Naive thymus-derived CD4-positive, alpha-beta T cell (primary cell): ENCODE measurements at regions of chr10 and their contacts with region 1.

Region 1: DNA sequence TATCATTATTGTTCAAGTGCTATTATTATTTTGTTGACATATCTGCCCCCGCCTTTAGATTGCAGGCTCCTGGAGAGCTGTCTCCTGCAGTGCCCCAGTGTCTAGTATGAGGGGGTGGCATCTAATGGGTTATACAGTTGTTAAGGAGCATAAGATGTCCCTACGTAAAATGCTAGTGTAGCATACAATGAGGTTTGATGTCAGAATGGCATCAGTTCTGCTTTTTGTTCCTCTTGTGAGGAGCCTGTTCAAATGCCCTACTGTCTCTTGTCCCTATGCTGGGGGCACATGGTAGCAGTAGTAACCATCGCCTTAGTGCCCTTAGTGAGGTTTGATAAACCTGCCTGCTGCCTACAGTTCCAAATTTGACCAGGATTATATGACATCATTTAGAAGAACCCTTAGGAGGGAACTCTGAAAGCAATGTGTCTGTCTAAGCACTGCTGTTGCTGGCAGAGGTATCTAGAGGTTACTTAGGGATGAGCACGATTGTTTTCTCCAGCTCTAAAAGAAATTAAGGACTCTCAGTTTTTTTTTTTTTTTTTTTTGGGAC is 9.7 kb downstream of the CREM start:
- DNase-seq: no peak
- ATAC-seq: peak; percentile 59
- H3K4me3 ChIP-seq: no peak overlapping the region
- H3K4me3 Mint-ChIP-seq: peak overlapping the region in 6 of 10 donors; percentile 0 to 65 (median 46)
- H3K27ac ChIP-seq: peak overlapping the region; percentile 14
- H3K27ac Mint-ChIP-seq: peak overlapping the region in 8 of 9 donors; percentile 3 to 87 (median 72)
- H3K4me1 ChIP-seq: peaks cover 17 to 23% of the 10 kb centered on the region in 2 donors
- H3K4me1 Mint-ChIP-seq: peaks cover 23 to 39% (median 35%) of the 10 kb centered on the region in 7 donors
- H3K27me3 ChIP-seq: no peaks in the 10 kb centered on the region
- H3K27me3 Mint-ChIP-seq: no peaks in the 10 kb centered on the region

Region 2: DNA sequence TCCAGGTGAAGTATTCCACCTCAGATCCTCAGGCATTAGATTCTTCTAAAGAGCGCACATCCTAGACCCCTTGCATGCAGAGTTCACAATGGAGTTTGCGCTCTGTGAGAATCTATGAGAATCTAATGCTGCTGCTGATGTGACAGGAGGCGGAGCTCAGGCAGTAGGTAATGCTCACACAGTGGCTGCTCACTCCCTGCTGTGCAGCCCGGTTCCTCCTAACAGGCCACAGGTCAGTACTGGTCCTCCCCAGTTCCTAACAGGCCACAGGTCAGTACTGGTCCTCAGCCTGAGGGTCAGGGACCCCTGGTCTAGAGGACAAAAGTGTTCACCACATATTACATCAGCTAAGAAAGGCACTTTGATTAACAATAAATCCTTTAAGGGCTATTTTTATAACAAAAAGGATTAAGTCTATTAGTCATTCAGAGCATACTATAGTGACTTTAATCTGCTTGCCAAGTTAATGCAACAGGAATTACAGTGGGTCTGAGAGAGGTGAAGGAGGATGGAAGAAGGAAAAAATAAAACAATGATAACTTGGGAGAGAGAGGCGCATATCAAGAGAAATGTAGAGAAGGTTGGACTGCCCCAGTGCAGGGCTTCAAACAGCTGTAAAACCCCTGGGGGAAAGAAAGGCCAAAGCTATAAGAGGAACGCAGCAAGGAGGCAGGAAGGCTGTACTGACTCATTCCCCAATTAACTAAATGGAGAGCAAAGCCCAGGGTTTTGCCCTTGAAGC is 95.4 kb before region 1 on chr10:
- CTCF ChIA-PET with region 1: no interaction called
- POLR2A ChIA-PET with region 1: no interaction called
- intact Hi-C with region 1: no loop called
- DNase-seq: no peak
- ATAC-seq: no peak
- H3K4me3 ChIP-seq: no peak overlapping the region
- H3K4me3 Mint-ChIP-seq: no peak overlapping the region
- H3K27ac ChIP-seq: no peak overlapping the region
- H3K27ac Mint-ChIP-seq: peak overlapping the region in 3 of 9 donors; percentile 7 to 39 (median 28)
- H3K4me1 ChIP-seq: no peaks in the 10 kb centered on the region
- H3K4me1 Mint-ChIP-seq: peaks cover 0 to 17% (median 5%) of the 10 kb centered on the region in 7 donors
- H3K27me3 ChIP-seq: no peaks in the 10 kb centered on the region
- H3K27me3 Mint-ChIP-seq: no peaks in the 10 kb centered on the region

Region 3: GRCh38 chr10:35153716-35154479 is 17.6 kb after region 1 on chr10:
- CTCF ChIA-PET with region 1: no interaction called
- POLR2A ChIA-PET with region 1: no interaction called
- intact Hi-C with region 1: loop called in 1 of 2 experiments (anchors 1 kb)
- DNase-seq: no peak
- ATAC-seq: no peak
- H3K4me3 ChIP-seq: no peak overlapping the region
- H3K4me3 Mint-ChIP-seq: no peak overlapping the region
- H3K27ac ChIP-seq: no peak overlapping the region
- H3K27ac Mint-ChIP-seq: no peak overlapping the region
- H3K4me1 ChIP-seq: peaks cover 9 to 14% of the 10 kb centered on the region in 2 donors
- H3K4me1 Mint-ChIP-seq: peaks cover 17 to 36% (median 21%) of the 10 kb centered on the region in 7 donors
- H3K27me3 ChIP-seq: no peaks in the 10 kb centered on the region
- H3K27me3 Mint-ChIP-seq: no peaks in the 10 kb centered on the region

Region 4: DNA sequence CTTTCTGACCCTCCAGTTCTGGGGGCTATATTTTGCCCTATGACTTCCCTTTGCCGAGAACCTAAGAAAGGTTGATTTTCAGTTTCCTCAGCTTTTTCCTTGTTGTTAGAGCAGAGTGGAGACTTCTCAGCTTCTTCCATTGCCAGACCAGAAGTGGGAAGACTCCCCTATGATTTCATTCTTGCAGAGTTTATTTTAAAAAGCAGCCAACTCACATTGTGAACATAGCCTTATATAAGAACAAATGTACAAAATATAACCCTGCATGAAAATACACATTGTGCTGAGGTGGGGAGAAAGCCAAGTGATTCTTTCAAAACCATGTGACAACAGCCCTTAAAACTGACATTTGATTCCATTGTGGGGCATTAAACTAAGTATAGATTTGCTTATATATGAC is 539.5 kb after region 1 on chr10:
- CTCF ChIA-PET with region 1: no interaction called
- POLR2A ChIA-PET with region 1: no interaction called
- intact Hi-C with region 1: no loop called
- DNase-seq: no peak
- ATAC-seq: no peak
- H3K4me3 ChIP-seq: no peak overlapping the region
- H3K4me3 Mint-ChIP-seq: no peak overlapping the region
- H3K27ac ChIP-seq: no peak overlapping the region
- H3K27ac Mint-ChIP-seq: no peak overlapping the region
- H3K4me1 ChIP-seq: no peaks in the 10 kb centered on the region
- H3K4me1 Mint-ChIP-seq: no peaks in the 10 kb centered on the region
- H3K27me3 ChIP-seq: no peaks in the 10 kb centered on the region
- H3K27me3 Mint-ChIP-seq: peaks cover 2 to 15% (median 9%) of the 10 kb centered on the region in 5 donors